CD4-positive, alpha-beta memory T cell (primary cell): ENCODE measurements at regions of chr2 and their contacts with region 1.

Region 1: DNA sequence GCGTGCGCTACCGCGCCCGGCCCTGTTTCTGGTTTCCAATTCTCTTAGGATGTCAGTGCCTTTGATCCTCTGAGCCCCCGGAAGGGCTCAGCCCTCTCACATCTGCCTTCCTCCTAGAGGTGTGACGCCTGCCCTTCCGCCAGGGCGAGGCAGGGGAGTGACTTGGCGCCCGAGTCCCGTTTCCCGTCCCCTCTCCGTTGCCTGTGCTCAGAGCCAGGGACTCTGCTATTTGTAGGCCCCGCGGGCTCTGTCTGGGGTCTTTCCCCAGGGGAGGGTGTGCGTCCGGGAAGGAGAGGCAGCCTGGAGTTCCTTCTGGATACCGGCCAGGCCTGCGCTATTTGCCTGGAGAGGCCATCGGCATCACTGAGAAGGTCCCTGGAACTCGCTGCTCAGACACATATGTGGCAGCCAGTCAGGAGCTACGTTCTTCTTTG is 103.7 kb upstream of the TAF1B start:
- DNase-seq: peak; percentile 48 to 70 (median 54)
- H3K4me3 ChIP-seq: peak overlapping the region in 1 of 2 donors; percentile 27
- H3K4me3 Mint-ChIP-seq: peak overlapping the region; percentile 73 to 97 (median 87)
- H3K27ac ChIP-seq: peak overlapping the region; percentile 62
- H3K27ac Mint-ChIP-seq: peak overlapping the region; percentile 87 to 99 (median 96)
- H3K4me1 ChIP-seq: peaks cover 49% of the 10 kb centered on the region
- H3K4me1 Mint-ChIP-seq: peaks cover 34 to 70% (median 48%) of the 10 kb centered on the region in 4 donors
- H3K27me3 ChIP-seq: no peaks in the 10 kb centered on the region
- H3K27me3 Mint-ChIP-seq: no peaks in the 10 kb centered on the region

Region 2: GRCh38 chr2:9712263-9712662 is 27.3 kb before region 1 on chr2:
- CTCF ChIA-PET with region 1: interaction called, 4 read pairs
- POLR2A ChIA-PET with region 1: interaction called, 10 read pairs
- intact Hi-C with region 1: no loop called
- DNase-seq: peak in 2 of 5 donors; percentile 21 to 25
- H3K4me3 ChIP-seq: peak overlapping the region in 1 of 2 donors; percentile 42
- H3K4me3 Mint-ChIP-seq: peak overlapping the region; percentile 60 to 86 (median 82)
- H3K27ac ChIP-seq: peak overlapping the region; percentile 61
- H3K27ac Mint-ChIP-seq: peak overlapping the region; percentile 63 to 95 (median 88)
- H3K4me1 ChIP-seq: peaks cover 49% of the 10 kb centered on the region
- H3K4me1 Mint-ChIP-seq: peaks cover 21 to 49% (median 38%) of the 10 kb centered on the region in 4 donors
- H3K27me3 ChIP-seq: no peaks in the 10 kb centered on the region
- H3K27me3 Mint-ChIP-seq: no peaks in the 10 kb centered on the region

Region 3: GRCh38 chr2:9753276-9753600 is 13.7 kb after region 1 on chr2:
- CTCF ChIA-PET with region 1: interaction called, 7 read pairs
- POLR2A ChIA-PET with region 1: interaction called, 43 read pairs
- intact Hi-C with region 1: loop called (anchors 1 kb)
- DNase-seq: peak in 4 of 5 donors; percentile 35 to 79 (median 48)
- H3K4me3 ChIP-seq: peak overlapping the region in 1 of 2 donors; percentile 52
- H3K4me3 Mint-ChIP-seq: peak overlapping the region; percentile 80 to 96 (median 94)
- H3K27ac ChIP-seq: peak overlapping the region; percentile 53
- H3K27ac Mint-ChIP-seq: peak overlapping the region; percentile 90 to 100 (median 99)
- H3K4me1 ChIP-seq: peaks cover 49% of the 10 kb centered on the region
- H3K4me1 Mint-ChIP-seq: peaks cover 29 to 72% (median 50%) of the 10 kb centered on the region in 4 donors
- H3K27me3 ChIP-seq: no peaks in the 10 kb centered on the region
- H3K27me3 Mint-ChIP-seq: no peaks in the 10 kb centered on the region